Right ventricle myocardium inferior (tissue), 1 donor: ENCODE measurements at regions of chr20 and their contacts with region 1.

Region 1: GRCh38 chr20:44475694-44476560 is at the start of gene TTPAL:
- DNase-seq: peak; percentile 96
- ATAC-seq: peak; percentile 97
- total RNA-seq, gene TTPAL: 2.9 TPM

Region 2: DNA sequence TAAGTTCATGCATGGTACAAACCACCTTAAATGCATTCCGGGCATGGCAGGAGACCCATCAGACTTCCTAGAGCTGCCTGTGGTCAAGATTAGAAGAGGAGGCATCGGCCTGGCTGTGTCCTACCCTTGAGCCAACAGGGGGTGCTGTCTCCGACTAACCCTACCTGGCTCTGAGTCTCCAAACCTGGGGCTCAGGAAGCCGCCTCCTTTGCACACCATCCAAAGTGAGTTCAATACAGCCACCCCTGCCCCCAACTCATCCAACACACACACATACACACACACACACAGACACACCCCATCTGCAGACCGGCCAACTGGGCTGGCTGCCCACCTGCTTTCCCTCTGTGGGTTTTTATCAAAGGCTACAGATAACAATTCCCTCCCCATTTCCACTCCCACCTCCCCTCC is 366.0 kb before region 1 on chr20:
- intact Hi-C with region 1: loop called (anchors 10 kb)
- DNase-seq: no peak
- ATAC-seq: peak; percentile 9